ENCODE measurements at regions of chr12 and their contacts with region 1.

Region 1: DNA sequence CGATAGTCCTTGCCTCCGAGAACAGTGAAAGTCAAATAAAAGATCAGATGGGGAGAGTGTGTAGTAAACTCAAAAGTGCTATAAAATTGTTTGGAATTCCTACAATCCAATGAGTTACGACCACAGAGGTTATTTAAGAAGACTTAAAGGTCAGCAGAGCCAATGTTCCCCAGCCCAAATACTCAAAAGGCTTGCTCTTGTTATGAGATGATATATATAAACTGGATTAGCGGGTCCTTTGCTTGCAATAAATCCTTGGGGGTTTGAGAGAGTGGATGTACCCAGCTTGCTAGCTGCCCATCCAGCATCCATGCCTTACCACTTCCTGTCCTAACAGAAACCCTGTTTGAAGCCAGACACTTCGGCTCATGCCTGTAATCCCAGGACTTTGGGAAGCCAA is 29.0 kb upstream of the MED13L start:
- DNase-seq: no peak
- H3K4me3 ChIP-seq: no peak overlapping the region
- H3K27ac ChIP-seq: no peak overlapping the region
- H3K4me1 ChIP-seq: no peaks in the 10 kb centered on the region
- H3K27me3 ChIP-seq: no peaks in the 10 kb centered on the region
- CTCF ChIP-seq: no peak
- POLR2A ChIP-seq: no peak

Region 2: GRCh38 chr12:116244001-116244400 is 62.5 kb before region 1 on chr12:
- intact Hi-C with region 1: no loop called
- DNase-seq: no peak
- H3K4me3 ChIP-seq: no peak overlapping the region
- H3K27ac ChIP-seq: peak overlapping the region in 1 of 2 donors; percentile 46
- H3K4me1 ChIP-seq: peaks cover 0 to 8% of the 10 kb centered on the region in 2 donors
- H3K27me3 ChIP-seq: no peaks in the 10 kb centered on the region
- CTCF ChIP-seq: no peak
- POLR2A ChIP-seq: no peak

Region 3: DNA sequence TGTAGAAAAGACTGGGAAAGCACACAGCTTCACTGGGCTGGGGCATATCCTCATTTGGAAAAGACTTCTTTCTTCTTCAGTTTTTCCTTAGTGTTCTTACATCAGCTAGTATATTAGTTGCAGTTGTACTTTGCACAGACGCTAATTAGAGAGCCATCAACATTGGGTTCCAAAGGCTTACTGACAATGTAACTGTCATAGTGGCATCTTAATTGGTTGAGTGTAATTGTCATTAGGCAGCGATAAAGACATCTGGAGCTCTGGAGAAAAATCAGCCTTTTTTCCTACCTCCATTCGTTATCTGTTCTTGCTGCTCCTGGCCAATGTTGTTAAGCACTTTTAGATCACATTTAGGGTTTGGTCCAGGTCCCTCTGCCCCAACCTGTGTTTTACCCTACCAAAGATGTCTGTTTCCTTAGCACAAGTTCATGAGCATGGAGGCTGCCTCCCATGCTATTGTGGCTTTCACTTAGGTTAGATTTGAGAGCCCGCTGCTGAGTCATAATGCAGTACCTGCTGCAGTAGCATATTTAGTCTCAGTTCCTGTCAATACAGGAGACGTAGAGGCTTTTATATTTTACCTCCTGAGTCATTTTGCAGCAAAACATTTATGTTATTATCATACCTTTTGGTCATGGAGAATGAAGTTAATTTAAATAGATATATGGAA is 653.5 kb after region 1 on chr12:
- intact Hi-C with region 1: loop called (anchors 5 kb)
- DNase-seq: no peak
- H3K4me3 ChIP-seq: no peak overlapping the region
- H3K27ac ChIP-seq: no peak overlapping the region
- H3K4me1 ChIP-seq: no peaks in the 10 kb centered on the region
- H3K27me3 ChIP-seq: no peaks in the 10 kb centered on the region
- CTCF ChIP-seq: no peak
- POLR2A ChIP-seq: no peak

Measured in breast epithelium (tissue), 4 donors.